Activated T-helper 2 cell treated with anti-CD3 and anti-CD28 coated beads, Interferon-gamma antibody, Interleukin-2, Interleukin-4, amounts not matched to agents 10 μg/mL and 5 μg/mL and 100 μg/mL, durations not matched to agents 14 hours and 24 hours and 36 hours (primary cell): ENCODE measurements at regions of chr5 and their contacts with region 1.

Region 1: DNA sequence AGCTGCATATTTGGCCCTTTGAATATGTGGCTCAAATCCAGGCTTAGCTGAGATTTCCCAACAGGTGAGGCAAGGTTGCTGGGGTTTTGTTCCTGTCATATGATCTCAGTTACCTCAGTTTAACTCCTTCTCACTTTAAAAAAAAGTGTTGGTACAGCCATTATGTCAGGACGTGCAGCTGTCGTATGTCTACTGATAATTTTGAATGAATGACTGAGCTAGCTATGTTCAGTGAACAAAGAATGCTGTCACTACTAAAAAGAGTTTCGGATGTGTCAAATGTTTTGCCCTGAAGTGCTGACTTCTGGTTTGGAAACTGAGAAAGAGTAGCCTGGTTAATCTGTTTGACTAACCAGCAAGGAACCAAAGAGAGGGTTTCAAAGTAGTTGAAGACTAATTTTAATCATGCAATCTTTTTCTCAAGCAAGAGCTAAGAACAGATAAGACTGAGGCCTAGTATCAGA is 106.3 kb upstream of the NR3C1 start:
- DNase-seq: no peak
- H3K4me3 Mint-ChIP-seq: no peak overlapping the region
- H3K27ac Mint-ChIP-seq: no peak overlapping the region
- H3K4me1 Mint-ChIP-seq: peaks cover 25% of the 10 kb centered on the region
- H3K27me3 Mint-ChIP-seq: no peaks in the 10 kb centered on the region

Region 2: GRCh38 chr5:143033535-143034250 is 476.1 kb before region 1 on chr5:
- intact Hi-C with region 1: no loop called
- DNase-seq: no peak
- H3K4me3 Mint-ChIP-seq: no peak overlapping the region
- H3K27ac Mint-ChIP-seq: no peak overlapping the region
- H3K4me1 Mint-ChIP-seq: peaks cover 70% of the 10 kb centered on the region
- H3K27me3 Mint-ChIP-seq: no peaks in the 10 kb centered on the region

Region 3: GRCh38 chr5:143564417-143564816 is 54.6 kb after region 1 on chr5:
- intact Hi-C with region 1: loop called (anchors 5 kb)
- DNase-seq: no peak
- H3K4me3 Mint-ChIP-seq: no peak overlapping the region
- H3K27ac Mint-ChIP-seq: no peak overlapping the region
- H3K4me1 Mint-ChIP-seq: peaks cover 9% of the 10 kb centered on the region
- H3K27me3 Mint-ChIP-seq: no peaks in the 10 kb centered on the region